ENCODE measurements at regions of chr6 and their contacts with region 1.

Region 1: GRCh38 chr6:29737707-29738630 is 14.7 kb downstream of the HLA-F start:
- DNase-seq: peak; percentile 57
- H3K27ac ChIP-seq: no peak overlapping the region
- CTCF ChIP-seq: peak; percentile 74

Region 2: DNA sequence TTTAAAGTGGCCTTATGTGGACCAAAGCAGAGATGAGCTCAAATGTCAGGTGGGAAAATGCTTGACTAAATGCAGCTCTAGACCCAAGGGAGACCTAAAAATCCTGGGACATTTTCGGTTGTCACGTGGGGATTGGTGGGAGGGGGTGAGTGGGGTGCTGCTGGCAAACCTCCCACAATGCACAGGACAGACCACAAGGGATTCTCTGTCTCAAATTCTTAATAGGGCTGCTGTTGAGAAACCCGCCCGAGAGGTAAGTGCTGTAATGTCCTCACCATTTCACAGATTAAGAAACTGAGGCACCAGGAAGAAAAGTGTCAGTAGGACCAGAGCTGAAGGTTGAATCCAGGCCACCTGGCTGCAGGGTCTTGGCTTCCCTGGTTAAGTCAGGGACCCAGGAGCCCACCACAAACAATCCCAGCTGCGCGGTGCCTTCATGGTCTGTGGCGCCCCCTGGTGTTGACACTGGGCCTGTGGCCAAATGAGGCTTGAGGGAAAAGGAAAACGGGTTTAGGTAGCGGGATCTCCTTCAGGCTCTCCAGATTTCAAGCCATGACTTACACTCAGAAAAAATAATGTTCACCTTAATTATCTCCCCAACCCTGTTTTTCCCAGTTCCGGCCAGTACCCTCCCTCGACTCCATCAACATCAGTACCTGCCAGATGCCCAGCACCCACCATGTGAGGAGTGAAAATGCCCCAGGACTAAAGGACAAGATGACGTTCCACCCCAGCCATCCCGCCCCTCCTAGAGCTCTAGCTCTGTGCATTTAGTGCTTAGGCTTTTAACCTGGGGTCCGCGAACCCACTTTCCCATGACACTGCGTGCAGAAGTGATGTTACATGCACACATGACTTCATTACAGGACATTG is 96.8 kb after region 1 on chr6:
- CTCF ChIA-PET with region 1: interaction called, 13 read pairs
- POLR2A ChIA-PET with region 1: no interaction called
- DNase-seq: no peak
- H3K27ac ChIP-seq: no peak overlapping the region
- CTCF ChIP-seq: peak; percentile 87